ENCODE measurements at regions of chr11 and their contacts with region 1.

Region 1: DNA sequence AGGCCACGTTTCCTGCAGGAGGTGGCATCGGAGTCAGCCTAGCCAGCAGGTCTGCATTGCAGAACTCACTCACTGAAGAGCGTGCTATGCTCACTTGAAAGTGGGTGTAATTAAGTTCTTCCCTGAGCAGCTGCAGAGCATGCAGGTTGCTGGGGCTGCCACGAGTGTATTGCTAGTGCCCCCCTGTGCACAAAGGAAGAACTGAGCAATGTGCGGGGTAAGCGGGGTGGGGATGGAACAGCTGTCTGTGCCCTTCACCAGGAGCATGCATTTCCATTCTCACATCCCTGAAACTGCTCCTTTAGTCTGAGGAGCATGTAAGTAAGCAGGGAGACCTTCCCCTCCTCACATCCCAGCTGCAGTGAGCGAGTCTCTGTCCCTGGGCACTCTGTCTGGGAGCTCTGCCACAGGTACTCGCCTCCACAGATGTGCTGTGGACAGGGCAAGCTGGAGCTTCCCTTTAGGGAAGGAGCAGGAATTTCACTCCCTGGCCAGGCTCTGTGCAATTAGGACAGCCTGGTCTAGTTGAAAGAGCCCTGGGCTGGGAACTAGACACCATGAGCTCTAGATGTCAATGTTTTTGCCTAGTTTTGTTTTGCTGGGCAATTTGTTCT is 1031.8 kb downstream of the NTM start:
- DNase-seq: no peak
- ATAC-seq: peak; percentile 78 to 90

Region 2: GRCh38 chr11:132114185-132114584 is 288.0 kb before region 1 on chr11:
- intact Hi-C with region 1: loop called in 1 of 2 experiments (anchors 5 kb)
- DNase-seq: no peak
- ATAC-seq: peak; percentile 27 to 67